Lower leg skin (tissue), 4 donors: ENCODE measurements at regions of chr5 and their contacts with region 1.

Region 1: GRCh38 chr5:167207081-167207480 is 1084.4 kb upstream of the WWC1 start:
- DNase-seq: no peak
- H3K4me3 ChIP-seq: no peak overlapping the region
- CTCF ChIP-seq: no peak
- POLR2A ChIP-seq: no peak

Region 2: DNA sequence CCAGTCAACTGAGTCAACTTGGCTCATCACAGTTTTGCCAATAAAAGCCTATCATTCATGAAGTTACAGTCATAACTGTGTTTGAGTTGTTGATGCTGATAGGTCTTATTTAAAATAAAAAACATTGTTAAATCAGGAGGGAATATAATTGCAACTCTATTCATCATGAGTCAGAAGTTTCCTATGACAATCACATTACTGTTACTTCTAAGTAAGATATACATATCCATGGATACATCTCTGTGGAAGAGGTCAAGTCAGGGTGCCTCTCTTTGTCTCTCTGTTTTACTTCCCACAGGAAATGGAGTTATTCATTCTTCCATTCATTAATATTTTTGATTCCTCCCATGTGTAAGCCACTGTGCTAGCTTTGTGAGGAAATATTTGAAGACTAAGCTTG is 931.1 kb before region 1 on chr5:
- intact Hi-C with region 1: no loop called
- DNase-seq: no peak
- H3K4me3 ChIP-seq: no peak overlapping the region
- CTCF ChIP-seq: no peak
- POLR2A ChIP-seq: no peak

Region 3: DNA sequence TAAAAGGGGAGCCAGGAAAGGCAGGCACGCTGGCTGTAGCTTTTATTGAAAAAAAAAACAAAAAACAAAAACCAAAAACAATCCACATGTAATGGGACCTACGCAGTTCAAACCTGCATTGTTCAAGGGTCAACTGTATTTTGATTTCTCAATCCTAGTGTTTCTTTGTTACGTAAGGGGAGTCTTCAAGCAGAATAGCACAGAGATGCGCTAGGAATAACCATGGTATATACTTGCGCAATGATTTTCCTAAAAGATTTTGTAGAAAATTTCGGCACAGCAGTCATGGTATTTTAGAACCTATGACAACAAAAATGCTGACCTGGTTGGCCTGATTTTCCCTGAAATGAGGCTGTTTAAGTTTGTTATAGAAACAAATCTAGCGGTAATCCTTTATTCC is 26.2 kb before region 1 on chr5:
- intact Hi-C with region 1: loop called (anchors 2 kb)
- DNase-seq: no peak
- H3K4me3 ChIP-seq: no peak overlapping the region
- CTCF ChIP-seq: no peak
- POLR2A ChIP-seq: no peak

Region 4: DNA sequence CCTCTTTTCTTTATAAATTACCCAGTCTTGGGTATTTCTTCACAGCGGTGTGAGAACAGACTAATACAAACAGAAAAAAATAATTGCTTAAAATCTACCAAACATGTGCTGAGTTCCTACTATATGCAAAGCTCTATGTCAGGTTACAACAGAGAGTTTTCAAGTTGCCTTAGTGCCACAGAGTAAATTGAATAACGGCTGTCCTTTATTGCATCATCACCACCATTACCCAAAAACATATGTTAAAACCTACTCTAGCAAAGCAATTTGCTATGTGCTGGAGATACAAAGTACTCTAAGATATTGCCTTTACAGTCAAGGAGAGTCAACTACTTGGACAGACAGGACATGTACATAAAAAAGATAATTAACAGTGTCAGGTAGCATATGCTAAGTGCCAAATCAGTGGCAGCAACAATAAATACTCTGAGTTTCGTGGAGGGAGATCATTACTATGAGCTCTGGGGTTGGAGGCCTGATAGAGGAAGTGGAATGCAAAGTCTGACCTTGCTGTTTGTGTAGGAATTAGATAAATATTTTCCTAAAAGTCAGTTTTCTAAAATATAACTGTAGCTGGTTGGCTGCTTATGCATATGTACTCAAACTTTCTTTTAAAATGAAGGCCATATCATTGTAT is 25.7 kb after region 1 on chr5:
- intact Hi-C with region 1: no loop called
- DNase-seq: no peak
- H3K4me3 ChIP-seq: no peak overlapping the region
- CTCF ChIP-seq: no peak
- POLR2A ChIP-seq: no peak